ENCODE measurements at regions of chr1 and their contacts with region 1.

Region 1: GRCh38 chr1:174262349-174263241 is 103.3 kb downstream of the RABGAP1L start:
- DNase-seq: no peak
- H3K4me3 ChIP-seq: no peak overlapping the region
- CTCF ChIP-seq: peak; percentile 58

Region 2: DNA sequence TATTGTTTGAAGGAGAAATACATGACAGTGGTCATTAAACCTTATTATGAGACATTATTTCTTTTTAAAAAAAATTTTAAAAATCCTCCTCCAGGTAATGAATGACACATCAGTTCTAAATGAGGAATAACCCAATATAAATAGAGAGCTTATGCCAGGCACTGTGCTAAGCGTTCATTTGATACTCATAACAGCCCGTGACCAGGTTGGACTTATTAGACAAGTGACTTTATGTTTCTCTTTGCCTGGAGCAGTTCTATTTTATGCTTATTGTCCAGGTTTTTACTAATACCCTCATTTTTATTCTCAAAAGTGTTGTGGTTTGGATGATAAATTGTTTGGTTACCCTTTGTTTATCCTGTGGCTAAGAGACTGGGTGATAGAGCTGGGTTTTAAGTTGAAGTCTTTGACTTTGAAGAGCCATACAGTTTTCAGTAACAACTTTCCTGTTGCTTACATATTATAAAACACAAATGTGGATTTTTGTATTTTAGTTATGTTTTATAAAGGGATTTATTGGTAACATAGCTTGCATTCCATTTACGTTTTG is 19.1 kb before region 1 on chr1:
- CTCF ChIA-PET with region 1: interaction called, 10 read pairs
- POLR2A ChIA-PET with region 1: no interaction called
- DNase-seq: no peak
- H3K4me3 ChIP-seq: no peak overlapping the region
- CTCF ChIP-seq: no peak

Region 3: DNA sequence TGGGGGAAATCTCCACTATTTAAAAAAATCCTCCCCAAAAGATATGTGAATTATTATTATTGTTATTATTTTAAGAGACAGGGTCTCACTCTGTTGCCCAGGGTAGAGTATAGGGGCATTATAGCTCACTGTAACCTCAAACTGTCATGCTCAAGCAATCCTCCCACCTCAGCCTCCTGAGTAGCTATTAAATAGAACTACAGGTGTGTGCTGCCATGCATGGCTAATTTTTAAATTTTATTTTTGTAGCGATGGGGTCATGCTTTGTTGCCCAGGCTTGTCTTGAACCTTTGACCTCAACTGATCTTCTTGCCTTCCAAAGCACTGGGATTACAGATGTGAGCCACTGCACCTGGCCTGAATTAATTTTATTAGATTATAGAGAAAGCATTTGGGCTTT is 13.5 kb after region 1 on chr1:
- CTCF ChIA-PET with region 1: interaction called, 50 read pairs
- POLR2A ChIA-PET with region 1: no interaction called
- DNase-seq: no peak
- H3K4me3 ChIP-seq: no peak overlapping the region
- CTCF ChIP-seq: no peak

Region 4: DNA sequence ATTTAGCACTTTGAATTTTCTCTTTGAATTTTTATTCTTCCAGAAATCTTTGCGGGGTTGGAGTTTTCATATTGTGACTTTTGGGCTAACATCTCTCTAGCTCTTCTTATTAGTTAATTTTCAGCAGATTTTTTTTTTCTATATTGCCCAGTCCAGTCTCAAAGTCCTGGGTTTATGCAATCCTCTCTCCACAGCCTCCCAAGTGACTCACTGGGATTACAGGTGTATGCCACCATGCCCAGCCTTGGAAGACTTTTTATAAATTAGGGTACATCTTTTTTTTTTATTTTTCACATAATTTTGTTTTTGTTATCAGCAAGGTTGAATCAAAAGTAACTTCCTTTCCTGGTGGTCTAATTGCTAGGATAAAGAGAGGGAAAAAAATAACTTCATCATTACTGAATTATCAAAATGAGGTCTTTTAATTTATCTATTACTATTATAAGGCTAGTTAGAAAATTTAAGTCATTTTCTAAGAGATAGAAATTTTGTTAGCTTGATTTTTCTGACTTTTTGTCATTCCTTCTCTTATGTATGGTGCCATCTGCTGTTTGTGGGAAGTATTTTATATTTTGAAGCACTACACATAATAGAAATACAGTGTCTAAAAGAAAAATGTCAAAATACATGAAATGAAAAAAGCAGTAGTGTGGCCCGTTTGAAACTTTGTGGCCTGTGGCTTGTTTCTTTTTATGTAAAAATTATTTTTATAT is 463.7 kb after region 1 on chr1:
- CTCF ChIA-PET with region 1: interaction called, 145 read pairs
- POLR2A ChIA-PET with region 1: no interaction called
- DNase-seq: no peak
- H3K4me3 ChIP-seq: no peak overlapping the region
- CTCF ChIP-seq: peak; percentile 20

Region 5: DNA sequence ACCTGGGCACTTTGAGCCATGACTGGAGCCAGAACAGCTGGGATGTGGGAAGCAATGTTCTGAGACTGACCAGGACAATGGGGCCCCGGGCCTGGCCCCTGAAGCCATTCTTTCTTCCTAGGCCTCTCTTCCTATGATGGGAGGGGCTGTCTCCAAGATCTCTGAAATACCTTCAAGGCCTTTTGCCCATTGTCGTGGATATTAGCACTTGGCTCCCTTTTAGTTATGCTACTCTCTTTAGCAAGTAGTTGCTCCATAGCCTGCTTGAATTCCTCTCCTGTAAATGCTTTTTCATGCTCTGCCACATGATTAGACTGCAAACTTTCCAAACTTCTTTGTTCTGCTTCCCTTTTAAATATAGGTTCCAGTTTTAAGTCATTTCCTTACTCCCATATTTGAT is 474.2 kb after region 1 on chr1:
- CTCF ChIA-PET with region 1: interaction called, 174 read pairs
- POLR2A ChIA-PET with region 1: no interaction called
- DNase-seq: no peak
- H3K4me3 ChIP-seq: no peak overlapping the region
- CTCF ChIP-seq: no peak

Region 6: GRCh38 chr1:174743654-174744561 is 481.3 kb after region 1 on chr1:
- CTCF ChIA-PET with region 1: interaction called, 174 read pairs
- POLR2A ChIA-PET with region 1: no interaction called
- DNase-seq: no peak
- H3K4me3 ChIP-seq: no peak overlapping the region
- CTCF ChIP-seq: peak; percentile 18